ENCODE measurements at regions of chr16 and their contacts with region 1.

Region 1: GRCh38 chr16:73047518-73048291 is at the start of gene ZFHX3:
- DNase-seq: peak; percentile 79 to 83 (median 82)
- H3K4me3 ChIP-seq: peak within 1 kb of the TSS; percentile 62 to 91 (median 82)
- H3K4me3 Mint-ChIP-seq: peak within 1 kb of the TSS; percentile 82 to 89
- H3K27ac ChIP-seq: peak within 1 kb of the TSS; percentile 74 to 91
- H3K27ac Mint-ChIP-seq: peak within 1 kb of the TSS; percentile 73 to 93 (median 88)
- H3K4me1 ChIP-seq: peaks cover 22 to 28% of the 10 kb centered on the region in 2 donors
- H3K4me1 Mint-ChIP-seq: peaks cover 36% of the 10 kb centered on the region
- H3K27me3 ChIP-seq: no peaks in the 10 kb centered on the region
- H3K27me3 Mint-ChIP-seq: peaks cover 5 to 11% (median 6%) of the 10 kb centered on the region in 3 donors
- CTCF ChIP-seq: no peak
- polyA plus RNA-seq, gene ZFHX3: 0.42 to 4.2 (median 0.43) TPM

Region 2: GRCh38 chr16:72832621-72833248 is 215.0 kb before region 1 on chr16:
- intact Hi-C with region 1: loop called (anchors 5 to 10 kb)
- DNase-seq: peak; percentile 64 to 68 (median 66)
- H3K4me3 ChIP-seq: no peak overlapping the region
- H3K4me3 Mint-ChIP-seq: no peak overlapping the region
- H3K27ac ChIP-seq: no peak overlapping the region
- H3K27ac Mint-ChIP-seq: peak overlapping the region in 2 of 7 donors; percentile 14 to 45
- H3K4me1 ChIP-seq: no peaks in the 10 kb centered on the region
- H3K4me1 Mint-ChIP-seq: peaks cover 5% of the 10 kb centered on the region
- H3K27me3 ChIP-seq: no peaks in the 10 kb centered on the region
- H3K27me3 Mint-ChIP-seq: peaks cover 0 to 4% (median 0%) of the 10 kb centered on the region in 3 donors
- CTCF ChIP-seq: peak; percentile 97

Region 3: GRCh38 chr16:72938795-72939164 is 108.9 kb before region 1 on chr16:
- intact Hi-C with region 1: loop called in 1 of 2 experiments (anchors 10 kb)
- DNase-seq: peak; percentile 67 to 83 (median 82)
- H3K4me3 ChIP-seq: no peak overlapping the region
- H3K4me3 Mint-ChIP-seq: peak overlapping the region in 1 of 2 donors; percentile 62
- H3K27ac ChIP-seq: peak overlapping the region; percentile 39 to 51
- H3K27ac Mint-ChIP-seq: peak overlapping the region; percentile 63 to 95 (median 80)
- H3K4me1 ChIP-seq: peaks cover 24 to 28% of the 10 kb centered on the region in 2 donors
- H3K4me1 Mint-ChIP-seq: peaks cover 33% of the 10 kb centered on the region
- H3K27me3 ChIP-seq: no peaks in the 10 kb centered on the region
- H3K27me3 Mint-ChIP-seq: peaks cover 0 to 2% (median 0%) of the 10 kb centered on the region in 3 donors
- CTCF ChIP-seq: no peak

Region 4: GRCh38 chr16:72978212-72978611 is 69.5 kb before region 1 on chr16:
- intact Hi-C with region 1: loop called in 1 of 2 experiments (anchors 5 kb)
- DNase-seq: peak; percentile 28 to 74 (median 42)
- H3K4me3 ChIP-seq: no peak overlapping the region
- H3K4me3 Mint-ChIP-seq: no peak overlapping the region
- H3K27ac ChIP-seq: peak overlapping the region in 1 of 2 donors; percentile 12
- H3K27ac Mint-ChIP-seq: peak overlapping the region; percentile 79 to 93 (median 89)
- H3K4me1 ChIP-seq: peaks cover 30 to 32% of the 10 kb centered on the region in 2 donors
- H3K4me1 Mint-ChIP-seq: peaks cover 33% of the 10 kb centered on the region
- H3K27me3 ChIP-seq: no peaks in the 10 kb centered on the region
- H3K27me3 Mint-ChIP-seq: peaks cover 0 to 3% (median 3%) of the 10 kb centered on the region in 3 donors
- CTCF ChIP-seq: no peak

Region 5: GRCh38 chr16:73019457-73020361 is 28.0 kb before region 1 on chr16:
- intact Hi-C with region 1: loop called in 1 of 2 experiments (anchors 2 kb)
- DNase-seq: no peak
- H3K4me3 ChIP-seq: no peak overlapping the region
- H3K4me3 Mint-ChIP-seq: no peak overlapping the region
- H3K27ac ChIP-seq: no peak overlapping the region
- H3K27ac Mint-ChIP-seq: peak overlapping the region in 3 of 7 donors; percentile 27 to 58 (median 55)
- H3K4me1 ChIP-seq: peaks cover 10 to 17% of the 10 kb centered on the region in 2 donors
- H3K4me1 Mint-ChIP-seq: peaks cover 27% of the 10 kb centered on the region
- H3K27me3 ChIP-seq: no peaks in the 10 kb centered on the region
- H3K27me3 Mint-ChIP-seq: peaks cover 0 to 4% (median 3%) of the 10 kb centered on the region in 3 donors
- CTCF ChIP-seq: no peak

Region 6: DNA sequence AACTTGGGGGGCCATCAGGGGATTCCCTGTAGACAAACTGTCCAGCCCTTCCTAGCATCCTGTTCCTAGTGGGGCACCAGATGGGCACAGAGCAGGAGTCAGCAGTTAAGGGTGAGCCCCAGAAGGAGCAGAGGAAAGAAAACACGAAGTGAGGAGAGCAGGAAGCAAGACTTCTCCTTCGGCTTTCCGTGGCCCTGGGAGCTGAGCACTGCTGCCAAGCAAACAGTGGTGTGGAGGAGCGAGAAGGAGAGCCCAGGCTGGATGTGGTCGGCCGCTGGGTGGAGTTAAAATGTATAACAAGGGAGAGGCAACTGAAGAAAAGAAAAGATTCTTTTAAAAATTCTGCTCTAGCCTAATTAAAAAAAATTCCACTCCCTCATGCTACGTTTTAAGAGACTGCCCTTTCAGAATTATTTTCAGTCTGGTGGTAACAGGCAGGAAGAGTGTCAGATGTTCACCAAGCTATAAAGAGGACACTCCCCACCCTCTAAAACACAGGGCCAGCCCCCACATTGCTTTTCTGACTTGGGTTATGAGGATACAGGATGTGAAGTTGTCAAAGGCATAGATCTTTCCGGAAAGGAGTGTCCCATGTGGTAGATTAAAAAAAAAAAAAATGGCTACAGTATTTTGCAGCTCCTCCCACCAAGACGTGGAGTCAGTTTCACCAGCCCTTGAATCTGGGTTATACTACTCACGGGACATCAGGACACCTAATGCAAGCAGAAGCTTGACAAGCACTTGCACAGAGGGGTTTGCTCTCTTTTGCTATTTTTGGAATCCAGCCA is 75.1 kb after region 1 on chr16:
- intact Hi-C with region 1: no loop called
- DNase-seq: peak; percentile 44 to 56 (median 47)
- H3K4me3 ChIP-seq: peak overlapping the region in 1 of 3 experiments; percentile 51
- H3K4me3 Mint-ChIP-seq: peak overlapping the region; percentile 42 to 83
- H3K27ac ChIP-seq: peak overlapping the region; percentile 85 to 92
- H3K27ac Mint-ChIP-seq: peak overlapping the region; percentile 88 to 98 (median 95)
- H3K4me1 ChIP-seq: peaks cover 55 to 56% of the 10 kb centered on the region in 2 donors
- H3K4me1 Mint-ChIP-seq: peaks cover 59% of the 10 kb centered on the region
- H3K27me3 ChIP-seq: no peaks in the 10 kb centered on the region
- H3K27me3 Mint-ChIP-seq: peaks cover 0 to 5% (median 3%) of the 10 kb centered on the region in 3 donors
- CTCF ChIP-seq: no peak

Measured in CD14-positive monocyte (primary cell).